Activated CD4-positive, alpha-beta memory T cell treated with anti-CD3 and anti-CD28 coated beads for 36 hours (primary cell): ENCODE measurements at regions of chr20 and their contacts with region 1.

Region 1: GRCh38 chr20:20860078-20860806 is 147.8 kb upstream of the RALGAPA2 start:
- DNase-seq: peak; percentile 91
- H3K4me3 Mint-ChIP-seq: no peak overlapping the region
- H3K27ac Mint-ChIP-seq: no peak overlapping the region
- H3K4me1 Mint-ChIP-seq: no peaks in the 10 kb centered on the region
- H3K27me3 Mint-ChIP-seq: peaks cover 14% of the 10 kb centered on the region

Region 2: GRCh38 chr20:19934792-19935491 is 925.3 kb before region 1 on chr20:
- CTCF ChIA-PET with region 1: no interaction called
- POLR2A ChIA-PET with region 1: no interaction called
- intact Hi-C with region 1: no loop called
- DNase-seq: no peak
- H3K4me3 Mint-ChIP-seq: no peak overlapping the region
- H3K27ac Mint-ChIP-seq: no peak overlapping the region
- H3K4me1 Mint-ChIP-seq: peaks cover 25% of the 10 kb centered on the region
- H3K27me3 Mint-ChIP-seq: peaks cover 14% of the 10 kb centered on the region

Region 3: GRCh38 chr20:20549718-20550117 is 310.5 kb before region 1 on chr20:
- CTCF ChIA-PET with region 1: no interaction called
- POLR2A ChIA-PET with region 1: no interaction called
- intact Hi-C with region 1: no loop called
- DNase-seq: no peak
- H3K4me3 Mint-ChIP-seq: no peak overlapping the region
- H3K27ac Mint-ChIP-seq: no peak overlapping the region
- H3K4me1 Mint-ChIP-seq: peaks cover 39% of the 10 kb centered on the region
- H3K27me3 Mint-ChIP-seq: no peaks in the 10 kb centered on the region

Region 4: GRCh38 chr20:20680991-20681508 is 179.2 kb before region 1 on chr20:
- CTCF ChIA-PET with region 1: no interaction called
- POLR2A ChIA-PET with region 1: no interaction called
- intact Hi-C with region 1: no loop called
- DNase-seq: no peak
- H3K4me3 Mint-ChIP-seq: no peak overlapping the region
- H3K27ac Mint-ChIP-seq: no peak overlapping the region
- H3K4me1 Mint-ChIP-seq: peaks cover 33% of the 10 kb centered on the region
- H3K27me3 Mint-ChIP-seq: no peaks in the 10 kb centered on the region

Region 5: DNA sequence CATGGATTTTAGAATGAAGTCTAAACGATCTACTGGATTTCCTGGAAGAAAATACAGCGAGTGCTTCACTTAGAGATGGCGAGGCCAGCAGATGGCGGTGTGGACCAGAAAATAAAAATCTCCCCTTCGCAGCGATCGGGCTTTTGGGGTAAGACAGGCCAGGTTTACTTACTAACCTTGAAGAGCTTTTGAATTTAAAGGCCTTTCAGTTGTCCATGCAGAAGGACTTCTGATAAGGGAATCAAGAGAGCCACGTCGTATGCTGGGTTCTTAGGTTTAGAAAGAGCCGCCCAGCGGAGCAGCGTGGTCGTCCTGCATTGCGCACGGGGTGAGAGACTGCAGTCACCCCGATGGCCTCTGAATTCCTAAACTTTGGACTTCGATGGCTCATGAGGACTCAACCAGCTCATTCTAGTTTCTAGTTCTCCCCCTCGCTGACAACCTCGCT is 22.6 kb before region 1 on chr20:
- CTCF ChIA-PET with region 1: interaction called, 13 read pairs
- POLR2A ChIA-PET with region 1: no interaction called
- intact Hi-C with region 1: no loop called
- DNase-seq: peak; percentile 58
- H3K4me3 Mint-ChIP-seq: no peak overlapping the region
- H3K27ac Mint-ChIP-seq: no peak overlapping the region
- H3K4me1 Mint-ChIP-seq: no peaks in the 10 kb centered on the region
- H3K27me3 Mint-ChIP-seq: peaks cover 10% of the 10 kb centered on the region

Region 6: GRCh38 chr20:20875716-20876115 is 15.5 kb after region 1 on chr20:
- CTCF ChIA-PET with region 1: interaction called, 20 read pairs
- POLR2A ChIA-PET with region 1: no interaction called
- intact Hi-C with region 1: no loop called
- DNase-seq: no peak
- H3K4me3 Mint-ChIP-seq: no peak overlapping the region
- H3K27ac Mint-ChIP-seq: no peak overlapping the region
- H3K4me1 Mint-ChIP-seq: no peaks in the 10 kb centered on the region
- H3K27me3 Mint-ChIP-seq: peaks cover 10% of the 10 kb centered on the region

Region 7: DNA sequence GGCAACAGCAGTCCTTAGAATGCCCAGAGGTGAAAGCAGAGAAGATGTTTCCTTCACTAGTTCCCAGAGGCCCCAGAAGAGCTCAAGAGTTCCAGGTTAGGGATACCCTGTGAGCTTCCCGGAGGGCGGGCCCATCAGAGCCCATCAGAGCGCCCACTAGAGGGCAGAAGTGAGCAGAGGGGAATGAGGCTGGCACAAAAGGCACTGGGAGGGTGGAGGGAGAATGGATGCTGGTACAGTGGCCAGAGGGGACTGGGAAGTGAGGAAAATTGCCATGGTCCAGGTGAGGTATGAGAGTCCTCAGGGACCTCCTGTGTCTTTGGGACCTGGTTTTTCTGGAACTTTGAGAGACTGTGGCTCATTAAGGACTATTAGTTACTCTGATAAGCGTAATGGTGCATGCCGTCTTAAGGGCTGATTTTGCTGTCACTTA is 188.6 kb after region 1 on chr20:
- CTCF ChIA-PET with region 1: interaction called, 4 read pairs
- POLR2A ChIA-PET with region 1: no interaction called
- intact Hi-C with region 1: loop called (anchors 5 kb)
- DNase-seq: peak; percentile 60
- H3K4me3 Mint-ChIP-seq: no peak overlapping the region
- H3K27ac Mint-ChIP-seq: no peak overlapping the region
- H3K4me1 Mint-ChIP-seq: no peaks in the 10 kb centered on the region
- H3K27me3 Mint-ChIP-seq: peaks cover 15% of the 10 kb centered on the region